ENCODE measurements at regions of chr5 and their contacts with region 1.

Region 1: GRCh38 chr5:118791926-118792734 is 196.2 kb downstream of the DTWD2 start:
- DNase-seq: peak in 2 of 5 donors; percentile 10 to 18
- H3K4me3 ChIP-seq: no peak overlapping the region
- H3K4me3 Mint-ChIP-seq: no peak overlapping the region
- H3K27ac ChIP-seq: no peak overlapping the region
- H3K27ac Mint-ChIP-seq: no peak overlapping the region
- H3K4me1 ChIP-seq: no peaks in the 10 kb centered on the region
- H3K4me1 Mint-ChIP-seq: peaks cover 0 to 2% (median under 1%) of the 10 kb centered on the region in 4 donors
- H3K27me3 ChIP-seq: no peaks in the 10 kb centered on the region
- H3K27me3 Mint-ChIP-seq: no peaks in the 10 kb centered on the region

Region 2: GRCh38 chr5:117454716-117455596 is 1337.2 kb before region 1 on chr5:
- CTCF ChIA-PET with region 1: interaction called, 11 read pairs
- POLR2A ChIA-PET with region 1: no interaction called
- intact Hi-C with region 1: no loop called
- DNase-seq: peak in 4 of 5 donors; percentile 36 to 47 (median 46)
- H3K4me3 ChIP-seq: peak overlapping the region in 1 of 2 donors; percentile 38
- H3K4me3 Mint-ChIP-seq: peak overlapping the region; percentile 24 to 85 (median 76)
- H3K27ac ChIP-seq: no peak overlapping the region
- H3K27ac Mint-ChIP-seq: peak overlapping the region in 2 of 7 donors; percentile 25 to 60
- H3K4me1 ChIP-seq: peaks cover 7% of the 10 kb centered on the region
- H3K4me1 Mint-ChIP-seq: peaks cover 3 to 17% (median 9%) of the 10 kb centered on the region in 4 donors
- H3K27me3 ChIP-seq: no peaks in the 10 kb centered on the region
- H3K27me3 Mint-ChIP-seq: peaks cover 0 to 3% of the 10 kb centered on the region in 2 donors

Region 3: DNA sequence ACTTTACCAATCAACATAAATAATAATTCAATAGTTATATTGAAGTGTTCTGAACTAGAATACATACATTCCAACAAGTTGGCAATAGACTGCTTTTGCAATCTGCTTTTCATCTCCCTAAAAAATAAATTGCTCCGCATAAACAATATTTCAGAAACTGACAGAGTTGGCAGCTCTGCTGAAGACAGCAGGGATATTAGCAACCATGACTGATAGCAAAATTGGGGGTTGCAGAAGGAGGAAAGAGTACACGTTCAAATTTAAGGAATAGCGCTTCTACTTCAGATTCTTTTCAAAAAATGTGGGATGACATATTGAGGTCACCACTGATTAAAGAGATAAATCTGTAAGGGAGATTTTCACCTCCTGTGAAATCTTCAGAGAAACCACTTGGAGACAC is 325.0 kb before region 1 on chr5:
- CTCF ChIA-PET with region 1: no interaction called
- POLR2A ChIA-PET with region 1: no interaction called
- intact Hi-C with region 1: no loop called
- DNase-seq: no peak
- H3K4me3 ChIP-seq: no peak overlapping the region
- H3K4me3 Mint-ChIP-seq: no peak overlapping the region
- H3K27ac ChIP-seq: no peak overlapping the region
- H3K27ac Mint-ChIP-seq: no peak overlapping the region
- H3K4me1 ChIP-seq: no peaks in the 10 kb centered on the region
- H3K4me1 Mint-ChIP-seq: no peaks in the 10 kb centered on the region
- H3K27me3 ChIP-seq: no peaks in the 10 kb centered on the region
- H3K27me3 Mint-ChIP-seq: no peaks in the 10 kb centered on the region

Region 4: GRCh38 chr5:118778941-118779340 is 13.2 kb before region 1 on chr5:
- CTCF ChIA-PET with region 1: interaction called, 10 read pairs
- POLR2A ChIA-PET with region 1: no interaction called
- intact Hi-C with region 1: no loop called
- DNase-seq: no peak
- H3K4me3 ChIP-seq: no peak overlapping the region
- H3K4me3 Mint-ChIP-seq: no peak overlapping the region
- H3K27ac ChIP-seq: no peak overlapping the region
- H3K27ac Mint-ChIP-seq: no peak overlapping the region
- H3K4me1 ChIP-seq: no peaks in the 10 kb centered on the region
- H3K4me1 Mint-ChIP-seq: no peaks in the 10 kb centered on the region
- H3K27me3 ChIP-seq: no peaks in the 10 kb centered on the region
- H3K27me3 Mint-ChIP-seq: peaks cover 0 to 1% of the 10 kb centered on the region in 2 donors